ENCODE measurements at regions of chr3 and their contacts with region 1.

Region 1: GRCh38 chr3:124078953-124079911 is 87.3 kb upstream of the ROPN1 start:
- H3K4me3 ChIP-seq: no peak overlapping the region
- H3K27ac ChIP-seq: no peak overlapping the region
- H3K4me1 ChIP-seq: no peaks in the 10 kb centered on the region; the same call in 1 of the 2 replicates
- CTCF ChIP-seq: no peak

Region 2: DNA sequence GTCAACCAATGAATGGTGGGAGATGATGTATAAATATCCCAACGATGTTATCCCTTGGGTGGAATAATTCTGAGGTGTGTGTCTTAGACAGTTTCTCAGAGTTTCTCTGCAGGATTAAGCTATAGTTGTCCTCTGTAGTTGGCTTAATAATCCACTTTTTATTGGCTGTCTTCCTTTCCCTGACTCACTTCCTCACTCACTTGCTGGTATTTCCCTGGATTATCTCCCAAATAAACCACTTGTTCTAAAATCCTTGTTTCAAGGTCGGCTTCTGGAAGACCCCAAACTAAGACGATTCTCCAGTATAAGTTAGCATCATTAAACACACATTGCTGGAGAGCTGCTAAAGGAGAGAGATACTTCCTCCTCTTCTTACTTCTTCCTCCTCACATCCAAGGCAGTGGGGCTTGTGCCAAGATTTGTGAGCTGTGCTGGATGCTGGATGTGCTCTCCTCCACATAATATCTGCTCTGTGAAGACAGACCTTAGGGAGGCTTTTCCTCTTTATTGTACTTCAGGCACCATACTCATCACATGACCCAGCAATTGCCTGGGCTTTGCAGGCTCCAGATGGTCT is 64.8 kb before region 1 on chr3:
- CTCF ChIA-PET with region 1: interaction called, 37 read pairs
- POLR2A ChIA-PET with region 1: no interaction called
- H3K4me3 ChIP-seq: no peak overlapping the region
- H3K27ac ChIP-seq: no peak overlapping the region
- H3K4me1 ChIP-seq: no peaks in the 10 kb centered on the region; the same call in 1 of the 2 replicates
- CTCF ChIP-seq: no peak

Region 3: GRCh38 chr3:124032648-124033359 is 46.4 kb before region 1 on chr3:
- CTCF ChIA-PET with region 1: interaction called, 10 read pairs
- POLR2A ChIA-PET with region 1: no interaction called
- H3K4me3 ChIP-seq: peak overlapping the region; percentile 79
- H3K27ac ChIP-seq: peak overlapping the region; percentile 72
- H3K4me1 ChIP-seq: no peaks in the 10 kb centered on the region
- CTCF ChIP-seq: peak; percentile 50

Region 4: DNA sequence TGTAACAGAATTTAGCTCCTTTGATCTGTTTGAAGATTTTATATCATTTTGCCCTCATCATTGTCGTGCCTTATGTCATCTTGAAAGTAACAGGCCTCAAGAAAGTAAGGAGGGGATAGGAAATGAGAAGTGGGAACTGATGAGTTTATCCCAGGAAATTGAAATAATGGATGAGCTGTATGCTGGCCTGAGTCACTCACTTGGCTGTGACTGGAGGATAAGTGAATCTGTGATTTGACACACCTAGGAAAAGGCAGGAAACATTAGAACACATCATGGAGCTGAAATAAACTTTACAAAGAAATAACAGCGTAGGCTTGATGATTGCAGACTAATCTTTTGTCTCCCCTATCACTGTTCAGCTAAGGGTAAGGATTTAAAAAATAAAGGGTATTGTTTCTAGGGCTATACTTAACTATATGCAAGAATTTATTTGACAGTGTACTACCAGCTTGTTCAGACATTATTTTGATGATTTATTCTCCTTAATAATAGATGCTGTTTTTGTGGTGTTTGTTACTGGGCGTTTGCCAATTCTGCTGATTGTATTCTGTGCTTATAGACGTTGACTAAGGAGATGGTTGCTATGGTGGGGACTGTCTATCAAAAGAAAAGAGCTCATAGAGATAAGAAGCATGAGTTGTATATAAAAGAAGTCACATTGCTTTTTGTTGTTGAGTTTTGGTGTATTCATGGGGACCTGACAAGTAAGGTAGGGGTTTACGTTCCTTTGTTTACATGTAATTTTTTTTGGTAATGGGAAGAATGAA is 18.3 kb after region 1 on chr3:
- CTCF ChIA-PET with region 1: interaction called, 16 read pairs
- POLR2A ChIA-PET with region 1: no interaction called
- H3K4me3 ChIP-seq: no peak overlapping the region
- H3K27ac ChIP-seq: no peak overlapping the region
- H3K4me1 ChIP-seq: no peaks in the 10 kb centered on the region
- CTCF ChIP-seq: no peak

Region 5: GRCh38 chr3:124217542-124217941 is 138.3 kb after region 1 on chr3:
- CTCF ChIA-PET with region 1: no interaction called
- POLR2A ChIA-PET with region 1: no interaction called
- H3K4me3 ChIP-seq: no peak overlapping the region
- H3K27ac ChIP-seq: no peak overlapping the region
- H3K4me1 ChIP-seq: no peaks in the 10 kb centered on the region
- CTCF ChIP-seq: no peak

Region 6: GRCh38 chr3:124281453-124282316 is 202.5 kb after region 1 on chr3:
- CTCF ChIA-PET with region 1: interaction called, 10 read pairs
- POLR2A ChIA-PET with region 1: no interaction called
- H3K4me3 ChIP-seq: no peak overlapping the region
- H3K27ac ChIP-seq: no peak overlapping the region
- H3K4me1 ChIP-seq: no peaks in the 10 kb centered on the region
- CTCF ChIP-seq: peak; percentile 42; the same call in 1 of the 2 replicates

Region 7: GRCh38 chr3:125165189-125165947 is 1086.1 kb after region 1 on chr3:
- CTCF ChIA-PET with region 1: no interaction called
- POLR2A ChIA-PET with region 1: no interaction called
- H3K4me3 ChIP-seq: no peak overlapping the region
- H3K27ac ChIP-seq: no peak overlapping the region
- H3K4me1 ChIP-seq: no peaks in the 10 kb centered on the region
- CTCF ChIP-seq: no peak

Measured in HEK293 (cell line).